Heart right ventricle (tissue), 16 donors: ENCODE measurements at regions of chr2 and their contacts with region 1.

Region 1: GRCh38 chr2:46876741-46877384 is 38.7 kb downstream of the MCFD2 start:
- DNase-seq: peak; percentile 53 to 61
- ATAC-seq: peak; percentile 34 to 58 (median 42)
- H3K4me3 ChIP-seq: no peak overlapping the region
- H3K27ac ChIP-seq: peak overlapping the region in 8 of 10 donors; percentile 44 to 75 (median 56)
- H3K4me1 ChIP-seq: peaks cover 16 to 77% (median 49%) of the 10 kb centered on the region in 9 donors
- H3K27me3 ChIP-seq: no peaks in the 10 kb centered on the region
- CTCF ChIP-seq: peak; percentile 49 to 86 (median 65)

Region 2: GRCh38 chr2:46657042-46657504 is 219.8 kb before region 1 on chr2:
- intact Hi-C with region 1: loop called in 4 of 10 experiments (anchors 5 kb)
- DNase-seq: no peak
- ATAC-seq: peak in 7 of 8 donors; percentile 21 to 82 (median 45)
- H3K4me3 ChIP-seq: no peak overlapping the region
- H3K27ac ChIP-seq: peak overlapping the region in 2 of 10 donors; percentile 13 to 68
- H3K4me1 ChIP-seq: peaks cover 0 to 21% (median 10%) of the 10 kb centered on the region in 9 donors
- H3K27me3 ChIP-seq: no peaks in the 10 kb centered on the region
- CTCF ChIP-seq: peak in 5 of 9 donors; percentile 20 to 51 (median 42)

Region 3: GRCh38 chr2:46803911-46804670 is 72.8 kb before region 1 on chr2:
- intact Hi-C with region 1: loop called in 7 of 10 experiments (anchors 1 to 10 kb)
- DNase-seq: no peak
- ATAC-seq: peak in 4 of 8 donors; percentile 10 to 24 (median 18)
- H3K4me3 ChIP-seq: no peak overlapping the region
- H3K27ac ChIP-seq: peak overlapping the region in 6 of 10 donors; percentile 13 to 68 (median 34)
- H3K4me1 ChIP-seq: peaks cover 0 to 37% (median 21%) of the 10 kb centered on the region in 9 donors
- H3K27me3 ChIP-seq: no peaks in the 10 kb centered on the region
- CTCF ChIP-seq: no peak

Region 4: GRCh38 chr2:46818121-46818888 is 58.6 kb before region 1 on chr2:
- intact Hi-C with region 1: loop called in 3 of 10 experiments (anchors 2 to 5 kb)
- DNase-seq: peak; percentile 86 to 87
- ATAC-seq: peak; percentile 81 to 94 (median 89)
- H3K4me3 ChIP-seq: no peak overlapping the region
- H3K27ac ChIP-seq: peak overlapping the region; percentile 71 to 92 (median 88)
- H3K4me1 ChIP-seq: peaks cover 44 to 73% (median 61%) of the 10 kb centered on the region in 9 donors
- H3K27me3 ChIP-seq: no peaks in the 10 kb centered on the region
- CTCF ChIP-seq: no peak

Region 5: GRCh38 chr2:46829231-46829920 is 47.5 kb before region 1 on chr2:
- intact Hi-C with region 1: no loop called
- DNase-seq: no peak
- ATAC-seq: no peak
- H3K4me3 ChIP-seq: no peak overlapping the region
- H3K27ac ChIP-seq: no peak overlapping the region
- H3K4me1 ChIP-seq: peaks cover 0 to 5% (median 0%) of the 10 kb centered on the region in 9 donors
- H3K27me3 ChIP-seq: no peaks in the 10 kb centered on the region
- CTCF ChIP-seq: no peak

Region 6: DNA sequence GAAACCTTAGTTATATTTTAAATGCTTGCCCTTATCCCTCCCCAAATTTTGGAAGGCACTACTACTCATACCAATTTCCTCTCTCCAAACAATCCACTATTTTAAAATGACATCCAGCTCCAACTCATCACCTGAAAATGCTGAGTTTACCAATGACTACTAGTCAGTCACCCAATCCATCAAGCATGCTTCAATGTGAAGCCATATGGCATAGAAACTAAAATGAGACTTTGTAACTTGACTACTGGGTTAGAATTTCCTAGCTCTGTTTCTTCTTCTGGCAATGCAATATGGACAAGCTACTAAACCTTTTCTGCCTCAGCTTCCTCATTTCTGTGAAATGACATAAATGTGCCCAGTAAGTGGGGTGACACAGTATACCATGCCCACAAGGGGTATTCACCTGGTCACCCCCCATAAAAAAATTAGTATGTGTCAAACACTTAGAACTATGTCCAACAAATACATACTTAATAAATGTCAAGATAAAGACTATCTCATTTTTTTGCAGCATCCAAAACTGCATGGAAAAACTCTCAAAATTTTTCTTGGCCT is 288.2 kb after region 1 on chr2:
- intact Hi-C with region 1: no loop called
- DNase-seq: no peak
- ATAC-seq: no peak
- H3K4me3 ChIP-seq: no peak overlapping the region
- H3K27ac ChIP-seq: no peak overlapping the region
- H3K4me1 ChIP-seq: peaks cover 0 to 83% (median 58%) of the 10 kb centered on the region in 9 donors
- H3K27me3 ChIP-seq: no peaks in the 10 kb centered on the region
- CTCF ChIP-seq: no peak